Posterior vena cava (tissue), 2 donors: ENCODE measurements at regions of chr18 and their contacts with region 1.

Region 1: DNA sequence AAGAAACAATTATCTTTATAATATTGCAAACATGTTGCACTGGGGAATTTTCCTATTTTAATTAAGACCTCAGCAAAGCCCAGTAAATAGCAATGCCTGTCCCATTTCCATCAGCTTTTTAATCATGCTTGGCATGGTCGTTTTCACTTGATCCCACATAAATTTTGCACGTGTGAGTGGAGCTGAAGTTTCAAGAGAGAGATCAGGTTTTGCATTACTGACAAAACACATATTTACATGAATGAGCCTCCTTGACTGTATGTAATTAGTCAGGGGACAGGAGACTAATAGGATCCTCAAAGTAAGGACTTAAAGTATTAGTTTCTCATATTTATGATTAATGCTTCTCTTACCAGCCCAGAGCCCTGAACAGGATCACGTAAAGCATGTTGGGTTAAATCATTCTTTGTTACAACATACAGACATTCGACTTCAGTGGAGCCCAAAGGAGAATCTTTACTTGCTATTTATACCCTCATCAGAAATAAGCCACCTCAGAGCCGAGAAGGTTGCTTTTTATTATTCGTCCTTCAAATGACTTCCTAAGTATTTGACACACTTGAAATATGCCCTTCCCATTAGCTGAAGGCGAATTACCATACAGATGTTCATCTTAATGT is 711.3 kb downstream of the GALR1 start:
- DNase-seq: no peak

Region 2: DNA sequence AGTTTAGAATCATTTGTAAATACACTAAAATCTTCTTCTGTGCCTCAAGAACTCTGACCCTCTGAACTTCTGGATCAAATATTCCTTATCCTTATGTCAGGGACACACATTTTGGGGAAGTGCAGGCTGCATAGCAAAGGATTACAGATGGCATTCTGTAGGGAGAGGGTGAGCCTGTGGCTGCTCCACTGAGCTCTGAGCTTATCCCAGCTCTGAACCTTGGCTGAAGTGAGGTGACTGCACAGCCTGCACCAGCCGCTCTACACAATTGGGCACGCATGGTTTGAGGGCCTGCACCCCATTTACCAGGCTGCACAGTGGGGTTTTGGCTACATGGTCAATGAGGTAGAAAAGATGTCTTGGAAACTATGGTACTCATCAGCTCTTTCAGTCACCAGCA is 459.6 kb before region 1 on chr18:
- intact Hi-C with region 1: loop called in 1 of 2 experiments (anchors 10 kb)
- DNase-seq: no peak

Region 3: GRCh38 chr18:79657342-79657985 is 1696.6 kb after region 1 on chr18:
- intact Hi-C with region 1: loop called in 1 of 2 experiments (anchors 5 kb)
- DNase-seq: no peak